Posterior cingulate gyrus (tissue), 11 donors: ENCODE measurements at regions of chr14 and their contacts with region 1.

Region 1: DNA sequence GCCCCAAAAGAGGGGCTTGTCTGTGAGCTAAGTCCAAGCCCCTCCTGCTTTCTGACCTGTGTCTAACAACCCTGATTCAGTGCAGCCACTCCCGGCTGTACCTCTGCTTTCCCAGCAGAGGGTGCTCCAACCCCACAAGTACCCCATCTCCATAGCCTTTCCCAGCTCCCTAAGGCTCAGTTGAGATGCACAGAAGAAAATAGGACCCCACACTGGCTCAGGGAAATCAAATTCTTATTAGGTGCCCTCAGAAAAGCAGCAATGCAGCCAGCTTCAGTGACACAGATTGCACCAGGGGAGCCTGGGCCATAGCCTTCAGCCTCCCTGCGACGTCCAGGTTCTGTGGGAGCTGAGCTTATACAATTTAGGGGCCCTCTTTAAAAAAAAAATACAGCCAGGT is 49.9 kb downstream of the LRRC74A start:
- DNase-seq: peak in 9 of 10 donors; percentile 39 to 96 (median 70)

Region 2: GRCh38 chr14:76654573-76655090 is 221.4 kb before region 1 on chr14:
- intact Hi-C with region 1: no loop called
- DNase-seq: peak in 1 of 10 donors; percentile 34

Region 3: DNA sequence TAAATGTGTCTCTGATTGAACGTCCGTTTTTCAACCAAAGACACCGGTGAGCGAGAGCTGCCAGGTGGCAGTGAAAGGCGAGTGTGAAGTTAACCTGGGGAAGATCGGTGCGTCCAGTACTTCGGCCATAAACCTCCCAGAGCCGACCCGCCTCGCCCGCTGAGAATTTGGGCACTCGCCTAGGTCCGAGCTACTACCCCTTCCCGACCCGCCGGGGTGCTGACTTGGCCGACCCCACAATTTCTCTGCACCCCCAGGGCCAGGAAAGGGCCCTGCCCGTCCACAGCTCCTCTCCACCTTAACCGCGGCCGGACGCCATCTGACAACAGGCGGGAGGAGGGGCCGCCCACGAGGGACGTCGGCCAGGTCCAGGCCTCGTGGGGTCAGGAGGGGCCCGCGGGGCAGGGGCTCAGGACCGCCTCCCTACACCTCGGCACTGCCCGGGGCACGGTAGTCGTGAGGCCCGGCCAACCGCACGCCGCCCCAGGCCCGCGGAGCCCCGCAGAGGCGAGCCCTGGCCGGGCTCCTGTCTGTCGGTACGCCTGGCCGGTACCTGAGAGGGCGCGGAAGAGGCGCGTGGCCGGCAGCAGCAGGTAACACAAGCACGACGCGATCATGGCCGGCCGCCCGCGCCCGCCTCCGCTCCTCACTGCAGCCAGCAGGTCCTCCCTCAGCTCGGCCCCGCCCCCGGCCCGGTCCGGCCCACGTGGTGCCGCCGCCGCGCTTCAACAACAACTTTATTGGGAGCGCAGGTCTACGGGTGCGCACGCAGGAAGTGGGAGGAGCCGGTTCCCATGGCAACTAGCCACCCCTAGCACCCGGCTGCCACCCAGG is 63.6 kb before region 1 on chr14 and contains the start of gene ANGEL1:
- intact Hi-C with region 1: loop called (anchors 10 kb)
- DNase-seq: peak; percentile 90 to 99 (median 92)

Region 4: GRCh38 chr14:76910371-76910890 is 34.4 kb after region 1 on chr14:
- intact Hi-C with region 1: loop called (anchors 5 kb)
- DNase-seq: peak in 1 of 10 donors; percentile 22

Region 5: DNA sequence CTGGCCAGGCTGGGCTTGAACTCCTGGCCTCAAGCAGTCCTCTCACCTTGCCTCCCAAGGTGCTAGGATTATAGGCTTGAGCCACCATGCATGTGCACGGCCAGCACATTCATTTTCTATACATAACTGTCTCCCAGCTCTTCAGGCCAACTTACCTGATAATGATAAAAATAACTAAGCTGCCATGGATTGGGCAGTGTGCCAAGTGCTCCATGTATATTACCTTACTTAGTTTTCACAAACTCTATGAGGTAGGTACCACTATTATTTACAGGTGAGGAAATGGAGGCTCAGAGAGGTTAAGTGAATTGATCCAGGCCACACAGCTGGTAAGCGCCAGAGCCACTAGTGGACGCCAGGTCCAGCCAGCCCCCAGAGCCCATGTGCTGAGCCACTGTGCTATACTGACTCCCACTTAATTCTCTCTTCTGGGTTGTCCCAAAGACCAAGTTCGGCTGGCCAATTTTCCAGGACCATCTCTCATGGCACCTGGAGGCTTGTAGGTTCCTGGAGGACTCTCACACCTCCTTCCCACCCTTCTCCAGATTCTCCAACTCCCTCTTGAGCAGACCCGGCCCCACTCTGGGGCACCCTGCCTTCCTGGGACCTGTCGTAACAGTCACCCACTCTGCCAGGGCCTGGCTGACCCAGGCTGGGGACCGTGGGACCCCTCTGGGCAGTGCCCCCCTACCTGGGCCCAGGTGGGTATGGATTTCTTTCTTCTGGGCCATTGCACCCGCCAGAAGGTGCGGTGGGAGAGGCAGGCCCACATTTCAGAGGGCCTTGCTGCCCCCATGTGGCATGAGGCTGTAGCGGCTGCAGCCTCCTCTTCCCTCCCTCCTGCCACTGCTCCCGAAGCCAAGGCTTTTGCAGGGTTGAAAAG is 191.8 kb after region 1 on chr14:
- intact Hi-C with region 1: loop called (anchors 1 kb)
- DNase-seq: peak; percentile 67 to 97 (median 77)

Region 6: DNA sequence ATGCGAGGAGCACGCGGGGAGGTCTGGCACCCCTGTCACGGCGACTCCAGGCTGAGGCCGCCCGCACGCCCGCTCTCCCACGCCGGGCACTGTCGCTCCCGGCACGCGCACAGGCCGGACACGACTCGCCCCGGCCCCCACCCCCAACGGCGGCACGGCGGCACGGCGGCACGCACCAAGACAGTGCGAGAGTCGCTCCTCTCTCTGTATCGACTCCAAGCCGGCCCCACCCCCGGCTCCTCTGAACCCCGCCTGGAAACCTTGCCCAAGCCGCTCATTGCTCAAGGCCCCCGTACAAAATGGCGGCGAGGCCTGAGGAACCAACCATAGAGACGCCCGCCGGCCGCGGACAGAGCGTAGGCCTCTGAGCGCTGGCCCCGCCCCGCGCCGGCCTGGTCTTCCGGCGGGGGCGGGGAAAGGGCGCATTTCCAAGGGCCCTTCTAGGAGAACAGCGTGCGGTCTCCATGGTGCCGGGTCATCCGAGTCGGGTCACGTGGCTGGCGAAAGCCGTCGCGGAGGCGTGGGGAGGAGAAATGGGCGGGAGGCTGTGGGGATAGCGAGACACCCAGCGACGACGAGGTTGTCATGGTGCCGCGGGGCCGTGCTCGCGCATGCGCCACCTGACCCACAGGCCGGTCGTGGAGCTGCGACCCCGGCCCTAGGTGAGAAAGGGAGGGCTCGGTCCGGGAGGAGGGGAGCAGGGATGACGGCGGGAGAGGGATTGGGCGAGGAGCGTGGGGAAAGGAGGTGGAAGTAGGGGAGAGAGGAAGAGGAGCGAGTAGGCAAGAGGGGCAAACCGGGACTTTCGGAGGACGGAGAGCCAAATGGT is 221.8 kb after region 1 on chr14 and contains the start of gene CIPC:
- intact Hi-C with region 1: loop called (anchors 1 kb)
- DNase-seq: peak; percentile 99 to 100 (median 100)

Region 7: GRCh38 chr14:77314043-77314442 is 438.0 kb after region 1 on chr14:
- intact Hi-C with region 1: loop called (anchors 10 kb)
- DNase-seq: peak in 4 of 10 donors; percentile 43 to 86 (median 50)